HAP-1 (cell line): ENCODE measurements at regions of chr15 and their contacts with region 1.

Region 1: GRCh38 chr15:96356494-96357455 is 26.3 kb downstream of the NR2F2 start:
- DNase-seq: peak; percentile 61 to 91
- H3K4me3 ChIP-seq: peak overlapping the region; percentile 65
- H3K4me1 ChIP-seq: peaks cover 11% of the 10 kb centered on the region
- H3K27me3 ChIP-seq: peaks cover 6% of the 10 kb centered on the region

Region 2: DNA sequence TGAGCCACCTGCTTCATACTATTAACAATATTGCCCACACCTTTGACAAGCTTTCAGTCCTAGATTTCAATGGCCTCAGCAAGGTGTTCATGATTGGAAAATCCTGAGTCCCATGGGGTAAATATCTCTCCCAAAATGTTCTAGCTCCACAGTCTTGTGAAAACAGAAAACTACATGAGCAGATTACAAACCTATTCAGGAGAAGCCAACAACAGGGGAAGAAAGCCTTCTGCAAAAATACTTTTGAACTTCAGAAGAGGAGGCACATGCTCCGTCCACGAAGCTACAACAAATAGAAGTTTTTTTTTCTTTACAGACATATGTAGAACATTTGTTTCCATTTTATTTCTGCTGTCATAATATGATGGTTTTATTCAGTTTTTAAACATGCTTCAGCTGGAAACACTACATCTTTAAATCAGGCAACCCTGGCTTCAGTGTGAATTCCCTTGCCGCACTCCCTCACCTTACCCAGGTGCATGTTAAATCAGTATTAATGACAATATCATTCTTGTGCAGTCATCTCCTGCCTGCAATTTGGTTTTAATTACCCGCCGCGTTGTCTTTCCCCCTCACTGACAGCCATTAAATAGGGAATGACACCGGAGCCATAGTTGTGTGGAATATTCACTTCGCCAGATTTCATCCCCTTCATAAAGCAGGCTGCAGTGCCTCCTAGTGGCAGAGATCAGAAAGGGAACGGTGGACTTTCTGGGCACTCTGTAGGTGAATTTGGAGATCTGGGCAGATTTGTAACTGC is 878.3 kb after region 1 on chr15:
- in situ Hi-C with region 1: loop called (anchors 10 kb)
- DNase-seq: peak; percentile 19 to 64
- H3K4me3 ChIP-seq: no peak overlapping the region
- H3K4me1 ChIP-seq: no peaks in the 10 kb centered on the region
- H3K27me3 ChIP-seq: no peaks in the 10 kb centered on the region